ENCODE measurements at regions of chr2 and their contacts with region 1.

Region 1: DNA sequence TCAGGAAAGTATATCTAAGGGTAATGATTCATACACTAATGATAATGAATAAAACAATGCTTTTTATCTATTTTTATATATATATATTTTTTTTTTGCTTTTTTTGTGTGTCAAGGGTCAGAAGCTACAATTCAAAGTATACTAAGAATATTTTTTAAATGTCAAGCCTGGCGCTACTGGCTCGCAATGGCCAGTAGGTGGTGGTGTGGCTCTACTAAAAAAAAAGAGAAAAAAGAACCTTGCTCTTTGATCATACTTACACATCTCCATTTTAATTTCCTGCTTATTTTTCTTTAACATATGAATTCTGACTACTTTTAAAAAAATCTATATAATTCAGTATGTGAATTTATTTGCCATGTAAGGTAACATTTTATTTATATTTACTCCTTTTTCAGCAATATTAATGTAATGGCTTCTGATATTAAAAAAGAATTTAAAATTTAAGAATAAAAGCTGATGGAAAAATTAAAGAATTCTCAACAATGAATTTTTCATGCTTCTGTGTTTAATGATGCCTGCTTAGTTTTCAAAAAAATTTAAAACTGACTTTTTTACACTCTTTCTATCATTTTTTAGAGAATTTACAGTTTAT is 232.9 kb downstream of the GULP1 start:
- DNase-seq: no peak
- H3K4me3 ChIP-seq: no peak overlapping the region
- H3K27ac ChIP-seq: no peak overlapping the region
- H3K4me1 ChIP-seq: peaks cover 1 to 42% (median 24%) of the 10 kb centered on the region in 4 donors
- H3K27me3 ChIP-seq: no peaks in the 10 kb centered on the region
- CTCF ChIP-seq: peak; percentile 81 to 85 (median 83)
- EP300 ChIP-seq: no peak
- POLR2A ChIP-seq: no peak

Region 2: DNA sequence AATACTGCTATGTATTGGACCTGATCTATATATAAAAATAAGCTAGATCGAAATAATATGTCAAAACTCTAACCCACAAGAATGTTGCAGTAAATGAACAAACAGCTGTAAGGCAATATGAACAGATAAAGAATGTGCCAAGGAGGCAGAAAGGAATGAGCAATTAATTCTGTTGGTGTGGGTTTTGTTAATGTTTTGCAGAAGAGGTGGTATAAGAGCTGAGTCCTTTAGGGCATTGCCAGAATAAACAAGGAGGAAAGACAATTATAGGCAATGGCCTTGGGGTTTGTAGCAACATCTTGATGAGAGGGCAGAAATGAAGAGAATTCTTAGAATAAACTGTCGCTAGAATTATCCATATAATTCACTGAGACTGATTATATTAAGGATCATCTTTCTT is 473.9 kb before region 1 on chr2:
- intact Hi-C with region 1: no loop called
- DNase-seq: no peak
- H3K4me3 ChIP-seq: no peak overlapping the region
- H3K27ac ChIP-seq: no peak overlapping the region
- H3K4me1 ChIP-seq: no peaks in the 10 kb centered on the region
- H3K27me3 ChIP-seq: no peaks in the 10 kb centered on the region
- CTCF ChIP-seq: no peak
- EP300 ChIP-seq: no peak
- POLR2A ChIP-seq: no peak

Region 3: DNA sequence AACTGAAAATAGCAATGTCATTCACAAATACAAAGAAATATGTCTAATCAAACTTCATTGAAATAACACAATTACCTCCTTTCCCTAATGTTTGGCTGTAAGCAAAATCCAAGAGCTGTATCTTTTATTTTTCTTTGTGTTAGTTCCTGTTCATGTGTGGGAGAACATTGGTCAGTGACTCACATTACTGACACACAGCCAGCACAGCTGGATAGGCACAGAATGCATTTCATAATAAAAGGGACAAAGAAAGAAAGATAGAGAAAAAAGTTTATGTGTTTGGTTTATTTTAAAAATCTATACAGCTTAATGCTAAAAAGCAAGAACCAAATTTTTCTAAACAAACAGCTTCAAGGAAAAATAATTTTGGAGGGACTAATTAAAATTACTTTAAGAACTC is 264.0 kb after region 1 on chr2:
- intact Hi-C with region 1: loop called (anchors 10 kb)
- DNase-seq: no peak
- H3K4me3 ChIP-seq: peak overlapping the region in 2 of 4 donors; percentile 13 to 38
- H3K27ac ChIP-seq: peak overlapping the region; percentile 67 to 87 (median 76)
- H3K4me1 ChIP-seq: peaks cover 17 to 35% (median 33%) of the 10 kb centered on the region in 4 donors
- H3K27me3 ChIP-seq: no peaks in the 10 kb centered on the region
- CTCF ChIP-seq: no peak
- EP300 ChIP-seq: no peak
- POLR2A ChIP-seq: no peak

Region 4: GRCh38 chr2:189412330-189412953 is 887.8 kb after region 1 on chr2:
- intact Hi-C with region 1: loop called (anchors 5 kb)
- DNase-seq: no peak
- H3K4me3 ChIP-seq: no peak overlapping the region
- H3K27ac ChIP-seq: peak overlapping the region; percentile 71 to 80 (median 72)
- H3K4me1 ChIP-seq: peaks cover 0 to 43% (median 27%) of the 10 kb centered on the region in 4 donors
- H3K27me3 ChIP-seq: no peaks in the 10 kb centered on the region
- CTCF ChIP-seq: peak; percentile 76 to 80 (median 77)
- EP300 ChIP-seq: no peak
- POLR2A ChIP-seq: no peak

Measured in esophagus muscularis mucosa (tissue), 4 donors.